Activated CD4-positive, alpha-beta T cell treated with anti-CD3 and anti-CD28 coated beads, Interleukin-2, amount 10 ng/mL, durations not matched to agents 24 days and 14 days (primary cell): ENCODE measurements at regions of chr17 and their contacts with region 1.

Region 1: GRCh38 chr17:76523084-76524037 is 14.1 kb downstream of the CYGB start:
- DNase-seq: peak; percentile 95
- H3K4me3 Mint-ChIP-seq: peak overlapping the region; percentile 41
- H3K27ac Mint-ChIP-seq: peak overlapping the region; percentile 67
- H3K4me1 Mint-ChIP-seq: peaks cover 20% of the 10 kb centered on the region
- H3K27me3 Mint-ChIP-seq: peaks cover 6% of the 10 kb centered on the region

Region 2: DNA sequence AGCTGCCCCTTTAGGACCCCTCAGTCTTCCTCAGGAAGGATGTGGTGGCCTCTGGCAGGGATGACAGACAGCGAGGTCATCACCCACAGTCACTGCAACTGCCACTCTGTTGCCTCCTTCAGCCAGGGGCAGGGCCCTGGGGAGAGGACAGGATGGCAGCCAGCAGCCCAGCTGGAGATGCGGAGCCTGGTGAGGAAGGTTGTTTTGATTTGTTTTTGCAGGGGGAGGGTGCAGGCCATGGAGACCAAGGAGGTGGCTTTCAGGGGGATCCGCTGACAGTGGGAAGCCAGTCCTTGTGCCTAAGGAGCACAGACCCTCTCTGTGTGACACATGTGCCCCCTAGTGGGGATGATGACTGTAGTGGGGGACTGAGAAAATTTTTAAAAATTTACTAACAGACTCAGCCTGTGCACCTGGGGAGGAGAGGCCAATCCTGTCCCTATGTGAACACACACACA is 23.9 kb after region 1 on chr17:
- intact Hi-C with region 1: loop called (anchors 1 kb)
- DNase-seq: peak; percentile 88
- H3K4me3 Mint-ChIP-seq: no peak overlapping the region
- H3K27ac Mint-ChIP-seq: no peak overlapping the region
- H3K4me1 Mint-ChIP-seq: peaks cover 6% of the 10 kb centered on the region
- H3K27me3 Mint-ChIP-seq: peaks cover 12% of the 10 kb centered on the region

Region 3: DNA sequence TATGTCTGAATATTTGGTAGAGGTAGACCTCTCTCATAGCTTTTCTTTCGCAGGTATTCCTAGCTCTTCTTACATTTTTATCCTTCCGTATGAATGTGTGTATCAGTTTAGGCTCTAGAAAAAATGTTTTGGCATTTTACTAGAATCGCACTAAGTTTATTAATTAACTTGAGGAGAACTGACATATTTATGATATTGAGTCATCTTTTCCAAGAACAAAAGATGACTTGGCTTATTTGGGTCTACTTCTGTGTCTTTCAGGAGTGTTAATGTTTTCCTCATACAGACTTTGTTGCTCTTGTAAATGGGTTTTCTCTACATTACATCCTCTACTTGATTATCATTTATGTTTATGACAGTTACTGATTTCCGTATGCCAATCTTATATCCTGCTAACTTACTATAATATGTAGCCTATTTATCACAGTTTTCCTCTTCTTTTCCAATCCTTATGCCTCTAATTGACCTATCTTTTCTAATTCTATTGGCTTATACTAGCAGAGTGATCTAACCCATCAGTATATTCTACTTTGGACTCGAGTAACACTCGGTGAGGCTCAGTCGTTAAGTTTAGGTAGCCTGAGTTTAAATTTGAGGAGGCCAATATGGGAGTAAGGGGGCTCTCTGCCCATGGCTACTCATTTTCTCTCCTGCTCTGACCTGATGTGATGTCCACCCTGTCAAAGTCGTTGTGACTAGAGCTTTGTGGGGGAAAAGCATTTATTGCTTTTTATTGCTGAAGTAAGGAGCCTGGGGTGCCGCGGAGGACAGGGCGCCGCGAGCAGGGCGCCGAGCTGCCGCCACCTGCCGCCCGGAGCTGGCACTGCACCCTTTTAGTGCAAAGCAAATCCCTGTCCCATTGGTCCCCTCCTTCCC is 100.1 kb after region 1 on chr17:
- intact Hi-C with region 1: loop called (anchors 1 kb)
- DNase-seq: peak; percentile 92
- H3K4me3 Mint-ChIP-seq: no peak overlapping the region
- H3K27ac Mint-ChIP-seq: no peak overlapping the region
- H3K4me1 Mint-ChIP-seq: peaks cover 6% of the 10 kb centered on the region
- H3K27me3 Mint-ChIP-seq: peaks cover 22% of the 10 kb centered on the region

Region 4: GRCh38 chr17:76658001-76658662 is 134.8 kb after region 1 on chr17:
- intact Hi-C with region 1: no loop called
- DNase-seq: no peak
- H3K4me3 Mint-ChIP-seq: no peak overlapping the region
- H3K27ac Mint-ChIP-seq: no peak overlapping the region
- H3K4me1 Mint-ChIP-seq: peaks cover 21% of the 10 kb centered on the region
- H3K27me3 Mint-ChIP-seq: no peaks in the 10 kb centered on the region

Region 5: DNA sequence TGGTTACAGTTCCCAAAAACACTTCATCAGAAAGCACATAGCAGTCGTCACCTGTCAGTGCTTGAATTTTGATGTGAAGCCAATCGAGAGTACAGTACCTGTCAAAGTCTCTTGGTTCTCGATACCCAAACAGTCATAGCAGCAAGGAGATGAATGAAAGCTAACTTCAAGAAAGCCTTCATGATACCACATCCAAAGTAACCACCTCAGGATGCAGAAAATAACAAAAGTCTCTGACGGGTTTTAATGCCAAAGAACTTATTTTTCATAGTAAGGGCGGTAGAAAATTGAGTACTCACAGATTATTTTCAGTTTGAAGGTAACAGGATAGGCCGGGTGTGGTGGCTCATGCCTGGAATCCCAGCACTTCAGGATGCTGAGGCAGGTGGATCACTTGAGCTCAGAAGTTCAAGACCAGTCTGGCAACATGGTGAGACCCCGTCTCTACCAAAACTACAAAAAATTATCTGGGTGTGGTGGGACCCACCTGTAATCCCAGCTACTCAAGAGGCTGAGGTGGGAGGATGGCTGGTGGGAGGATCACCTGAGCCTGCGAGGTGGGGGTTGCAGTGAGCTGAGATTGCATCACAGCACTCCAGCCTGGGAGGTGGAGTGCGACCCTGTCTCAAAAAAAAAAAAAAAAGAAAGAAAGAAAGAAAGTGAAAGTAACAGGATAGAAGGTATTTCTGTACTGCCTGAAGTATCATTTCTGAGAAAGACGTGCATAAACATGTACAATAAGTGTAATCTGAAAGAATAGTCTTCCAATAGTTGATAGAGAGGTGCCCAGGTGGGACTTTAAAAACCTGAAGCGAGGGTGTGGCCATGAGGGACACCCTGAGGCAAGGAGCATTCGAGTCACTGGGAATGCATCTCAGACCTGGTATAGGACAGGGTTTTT is 229.9 kb after region 1 on chr17:
- intact Hi-C with region 1: no loop called
- DNase-seq: peak; percentile 77
- H3K4me3 Mint-ChIP-seq: peak overlapping the region; percentile 89
- H3K27ac Mint-ChIP-seq: peak overlapping the region; percentile 92
- H3K4me1 Mint-ChIP-seq: peaks cover 23% of the 10 kb centered on the region
- H3K27me3 Mint-ChIP-seq: no peaks in the 10 kb centered on the region